Panc1 (cell line): ENCODE measurements at regions of chr10 and their contacts with region 1.

Region 1: GRCh38 chr10:88901206-88901983 is 21.4 kb downstream of the STAMBPL1 start:
- DNase-seq: no peak
- ATAC-seq: no peak
- H3K4me3 ChIP-seq: no peak overlapping the region
- H3K27ac ChIP-seq: peak overlapping the region; percentile 31; the same call in 1 of the 2 replicates
- H3K4me1 ChIP-seq: peaks cover 34% of the 10 kb centered on the region
- H3K27me3 ChIP-seq: no peaks in the 10 kb centered on the region
- CTCF ChIP-seq: no peak

Region 2: GRCh38 chr10:88851706-88852105 is 49.7 kb before region 1 on chr10 and contains the start of gene ANKRD22:
- CTCF ChIA-PET with region 1: no interaction called
- POLR2A ChIA-PET with region 1: interaction called, 10 read pairs
- in situ Hi-C with region 1: no loop called
- intact Hi-C with region 1: no loop called
- DNase-seq: no peak
- ATAC-seq: peak; percentile 72
- H3K4me3 ChIP-seq: no peak within 1 kb of the TSS
- H3K27ac ChIP-seq: no peak within 1 kb of the TSS
- H3K4me1 ChIP-seq: peaks cover 9% of the 10 kb centered on the region
- H3K27me3 ChIP-seq: no peaks in the 10 kb centered on the region
- CTCF ChIP-seq: no peak
- total RNA-seq, gene ANKRD22: 0.15 TPM

Region 3: DNA sequence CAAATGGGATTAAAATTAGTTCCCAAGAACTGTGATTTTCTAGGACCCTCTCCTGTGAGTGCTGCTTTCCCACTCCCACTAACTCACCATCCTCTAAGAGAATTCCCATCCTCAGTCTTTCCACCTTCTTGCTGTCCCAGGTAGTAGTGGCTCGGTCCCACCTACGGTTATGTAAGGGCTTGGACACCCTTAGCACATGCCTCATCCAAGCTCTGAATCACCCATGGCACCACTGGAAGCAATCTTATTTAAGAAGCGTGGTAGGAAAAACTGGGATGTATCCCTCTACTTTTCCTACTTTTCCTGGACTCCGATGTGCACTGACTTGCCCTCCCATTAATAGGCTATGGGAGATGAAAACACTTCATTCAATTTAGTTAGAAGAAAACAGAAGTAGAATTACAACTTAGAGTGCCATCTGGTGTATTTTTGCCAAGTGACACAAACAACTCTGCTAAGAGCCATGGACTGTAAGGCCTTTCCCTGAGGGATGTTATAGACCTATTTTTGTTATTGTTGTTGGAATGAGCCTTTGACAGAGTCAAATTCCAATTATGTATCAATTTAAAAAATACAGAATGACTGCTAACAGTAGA is 36.0 kb before region 1 on chr10:
- CTCF ChIA-PET with region 1: no interaction called
- POLR2A ChIA-PET with region 1: no interaction called
- in situ Hi-C with region 1: no loop called
- intact Hi-C with region 1: loop called (anchors 1 kb)
- DNase-seq: no peak
- ATAC-seq: no peak; the same call in 1 of the 2 replicates
- H3K4me3 ChIP-seq: no peak overlapping the region
- H3K27ac ChIP-seq: no peak overlapping the region
- H3K4me1 ChIP-seq: no peaks in the 10 kb centered on the region
- H3K27me3 ChIP-seq: no peaks in the 10 kb centered on the region
- CTCF ChIP-seq: peak; percentile 24; the same call in 1 of the 2 replicates

Region 4: DNA sequence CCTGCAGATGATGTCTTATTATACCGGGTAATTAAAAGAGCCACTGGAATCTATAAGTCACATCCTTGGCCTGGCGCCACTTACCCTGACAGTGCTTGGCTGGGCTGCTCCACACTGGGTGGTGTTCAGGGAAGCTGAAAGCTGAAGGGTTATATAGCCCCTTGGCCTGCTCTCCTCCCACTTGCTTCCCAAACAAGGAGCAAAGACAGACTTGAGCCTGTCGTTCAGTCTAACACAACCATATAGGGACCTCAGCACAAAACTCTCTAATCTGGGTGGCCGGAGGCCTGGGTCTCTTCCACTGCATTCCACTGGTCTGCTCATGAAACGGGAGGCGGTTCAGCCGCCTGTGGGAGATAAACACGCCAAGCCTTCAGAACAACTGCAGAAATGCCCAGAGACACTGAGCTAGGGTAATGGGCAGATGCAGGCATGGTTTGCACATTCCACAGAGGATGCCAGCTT is 51.3 kb after region 1 on chr10 and contains the start of gene ACTA2:
- CTCF ChIA-PET with region 1: no interaction called
- POLR2A ChIA-PET with region 1: no interaction called
- in situ Hi-C with region 1: no loop called
- intact Hi-C with region 1: no loop called
- DNase-seq: no peak
- ATAC-seq: no peak
- H3K4me3 ChIP-seq: no peak within 1 kb of the TSS
- H3K27ac ChIP-seq: no peak within 1 kb of the TSS
- H3K4me1 ChIP-seq: no peaks in the 10 kb centered on the region
- H3K27me3 ChIP-seq: no peaks in the 10 kb centered on the region
- CTCF ChIP-seq: no peak
- total RNA-seq, gene ACTA2: 4.7 TPM

Region 5: GRCh38 chr10:89668386-89669071 is 767.1 kb after region 1 on chr10:
- CTCF ChIA-PET with region 1: no interaction called
- POLR2A ChIA-PET with region 1: no interaction called
- in situ Hi-C with region 1: no loop called
- intact Hi-C with region 1: no loop called
- DNase-seq: no peak
- ATAC-seq: no peak; the same call in 1 of the 2 replicates
- H3K4me3 ChIP-seq: no peak overlapping the region
- H3K27ac ChIP-seq: no peak overlapping the region
- H3K4me1 ChIP-seq: no peaks in the 10 kb centered on the region
- H3K27me3 ChIP-seq: no peaks in the 10 kb centered on the region; the same call in 1 of the 2 replicates
- CTCF ChIP-seq: no peak